GM10248 (cell line): ENCODE measurements at regions of chr11 and their contacts with region 1.

Region 1: GRCh38 chr11:76120513-76121101 is 85.7 kb downstream of the WNT11 start:
- DNase-seq: no peak
- CTCF ChIP-seq: no peak

Region 2: DNA sequence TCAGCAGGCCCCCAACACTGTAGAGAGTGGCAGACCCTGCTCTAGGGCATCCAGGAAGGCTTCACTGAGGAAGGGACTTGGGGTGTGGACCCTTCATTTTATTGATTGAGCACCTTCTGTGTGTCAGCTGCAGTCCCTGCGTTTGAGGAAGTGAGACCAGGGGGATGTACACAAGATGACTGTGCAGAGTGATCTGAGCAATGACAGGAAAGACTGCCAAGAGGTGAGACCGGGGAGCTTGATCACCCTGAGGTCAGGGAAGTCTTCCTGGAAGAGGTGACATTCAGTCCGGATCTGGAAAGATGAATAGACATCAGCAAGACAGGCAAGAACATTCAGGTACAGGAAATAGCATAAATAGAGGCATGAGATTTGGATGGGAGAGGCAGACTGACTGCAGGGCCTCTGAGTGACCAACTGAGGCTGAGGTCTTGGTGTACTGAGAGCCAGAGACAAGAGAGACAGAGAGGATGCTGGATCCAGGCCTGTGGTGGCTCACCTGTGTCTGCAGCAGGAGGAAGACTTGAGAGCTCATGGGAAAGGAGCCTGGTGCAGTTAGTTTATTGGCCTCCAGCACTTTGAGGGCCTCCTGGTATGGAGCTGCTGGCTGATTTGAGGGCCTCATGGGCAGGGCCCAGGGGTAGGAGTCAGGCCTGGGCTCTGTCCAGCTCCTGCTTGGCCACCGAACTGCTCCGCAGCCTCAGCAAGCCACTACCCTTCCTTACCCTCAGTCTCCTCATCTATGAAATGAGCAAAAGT is 346.8 kb before region 1 on chr11:
- CTCF ChIA-PET with region 1: no interaction called
- POLR2A ChIA-PET with region 1: no interaction called
- DNase-seq: peak; percentile 85
- CTCF ChIP-seq: no peak

Region 3: DNA sequence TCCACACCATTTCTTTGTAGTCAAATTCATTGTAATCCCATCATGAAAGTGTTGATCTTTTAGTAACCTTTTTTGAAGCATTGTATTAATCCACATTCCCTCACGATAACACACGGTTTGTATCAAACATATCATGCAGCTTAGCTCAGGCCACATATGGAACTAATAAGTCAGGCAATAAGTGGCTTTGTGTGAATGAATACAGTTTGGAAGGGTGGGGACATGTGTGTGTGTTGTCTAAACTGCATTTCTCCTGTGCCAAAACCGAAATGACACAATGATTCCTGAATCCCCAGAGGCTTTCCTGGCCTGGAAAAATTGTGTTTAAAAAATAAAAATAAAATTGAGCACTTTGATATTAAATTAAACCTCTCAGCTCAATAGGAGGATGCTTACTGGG is 12.6 kb before region 1 on chr11:
- CTCF ChIA-PET with region 1: interaction called, 15 read pairs
- POLR2A ChIA-PET with region 1: no interaction called
- DNase-seq: no peak
- CTCF ChIP-seq: no peak

Region 4: GRCh38 chr11:76131671-76132631 is 11.3 kb after region 1 on chr11:
- CTCF ChIA-PET with region 1: interaction called, 25 read pairs
- POLR2A ChIA-PET with region 1: no interaction called
- DNase-seq: no peak
- CTCF ChIP-seq: no peak

Region 5: DNA sequence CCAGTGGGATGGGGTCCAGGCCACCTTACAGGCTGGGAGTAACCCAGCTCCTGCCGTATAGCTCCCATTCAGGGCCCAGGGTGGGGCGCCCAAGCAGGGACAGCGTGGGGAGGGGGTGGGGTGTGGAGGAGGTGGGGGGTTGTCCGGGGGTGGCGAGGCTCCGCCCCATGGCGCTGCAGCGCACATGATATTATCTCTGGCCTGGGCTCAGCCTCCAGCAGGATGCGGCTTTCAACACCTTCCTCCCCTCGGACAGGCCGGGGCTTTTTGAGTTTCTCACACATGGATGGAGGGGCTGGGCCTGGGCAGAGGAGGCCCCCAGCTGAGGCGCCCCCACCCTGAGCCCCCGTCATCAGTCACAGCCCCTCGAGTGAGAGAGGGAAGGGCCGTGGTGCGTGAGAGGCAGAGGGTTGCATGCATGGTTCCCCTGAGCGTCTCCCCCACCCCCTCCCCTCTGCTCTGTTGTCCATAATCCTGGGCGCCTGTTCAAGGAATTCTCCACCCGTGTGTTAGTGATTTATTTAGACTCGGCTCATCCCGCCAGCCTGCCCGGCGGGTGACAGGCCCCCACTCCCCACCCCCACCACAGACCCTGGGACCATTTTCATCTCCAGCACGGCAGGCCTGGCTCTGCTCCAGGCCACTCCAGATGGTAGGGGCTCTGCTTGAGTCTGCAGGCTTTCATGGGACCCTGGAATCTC is 40.8 kb after region 1 on chr11:
- CTCF ChIA-PET with region 1: no interaction called
- POLR2A ChIA-PET with region 1: no interaction called
- DNase-seq: no peak
- CTCF ChIP-seq: no peak

Region 6: DNA sequence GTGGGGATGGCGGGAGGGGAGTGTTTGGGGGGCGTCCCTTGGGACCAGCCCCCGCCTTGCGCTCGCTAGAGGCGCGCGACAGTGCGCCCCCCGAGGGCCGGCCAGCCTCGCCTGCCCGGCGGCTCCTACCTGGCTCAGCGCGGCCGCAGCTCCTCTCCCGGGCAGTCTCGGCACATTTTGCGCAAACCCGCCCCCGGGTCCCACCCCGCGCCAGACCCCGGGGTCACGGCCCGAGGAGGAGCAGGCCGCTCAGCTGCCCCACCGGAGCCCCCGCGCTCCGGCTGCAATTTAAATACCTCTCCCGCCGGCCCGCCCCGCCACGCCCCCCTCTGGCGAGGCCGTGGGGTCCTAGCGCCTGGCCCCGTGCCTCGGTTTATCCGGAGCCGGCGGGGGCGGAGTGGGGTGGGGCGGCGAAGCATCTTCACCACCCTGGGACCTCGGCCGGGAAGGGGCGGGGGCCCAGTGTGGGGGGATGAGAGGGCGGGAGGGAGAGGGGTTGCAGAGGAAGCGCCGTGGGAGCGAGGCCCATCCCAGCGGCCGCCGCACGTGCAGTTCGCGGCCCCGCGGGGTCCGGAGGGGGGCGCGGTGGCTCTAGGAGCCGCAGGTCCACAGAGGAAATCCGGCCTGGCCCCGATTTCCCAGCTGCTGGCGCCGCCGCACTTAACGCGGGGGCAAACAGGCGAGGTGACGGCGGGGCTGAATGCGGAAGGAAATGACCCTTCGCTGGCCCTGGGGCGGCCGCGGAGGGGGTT is 550.1 kb after region 1 on chr11 and contains the start of gene LRRC32:
- CTCF ChIA-PET with region 1: no interaction called
- POLR2A ChIA-PET with region 1: no interaction called
- DNase-seq: peak; percentile 59
- CTCF ChIP-seq: no peak